WTC11 (cell line): ENCODE measurements at regions of chr16 and their contacts with region 1.

Region 1: DNA sequence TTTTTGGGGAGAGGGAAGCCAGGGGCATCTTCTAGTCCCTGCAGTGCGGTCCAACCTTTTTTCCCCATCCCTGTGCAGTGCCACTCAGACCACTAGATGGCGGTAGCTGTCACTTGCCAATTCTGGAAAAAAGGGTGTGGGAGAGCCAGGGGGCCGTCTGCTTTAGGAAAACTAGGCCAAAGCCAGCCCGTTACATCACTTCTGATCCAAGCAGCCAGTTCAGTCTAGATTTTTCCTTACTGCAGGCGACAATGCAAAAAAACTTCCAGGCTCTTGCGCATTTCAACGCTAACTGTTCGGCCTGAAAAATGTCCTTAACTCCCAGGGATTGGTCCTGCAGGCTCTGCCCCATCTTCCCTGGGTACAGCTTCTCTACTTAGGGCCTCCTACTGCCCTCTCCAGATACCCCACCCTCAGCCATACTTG is 69.2 kb upstream of the CES5A start:
- DNase-seq: peak; percentile 80
- ATAC-seq: peak; percentile 97
- H3K4me3 Mint-ChIP-seq: no peak overlapping the region
- H3K27ac Mint-ChIP-seq: no peak overlapping the region
- H3K4me1 Mint-ChIP-seq: peaks cover 22% of the 10 kb centered on the region
- H3K27me3 Mint-ChIP-seq: no peaks in the 10 kb centered on the region; the same call in none of the 2 replicates
- CTCF ChIP-seq: peak; percentile 88

Region 2: GRCh38 chr16:55861288-55861687 is 83.1 kb before region 1 on chr16:
- CTCF ChIA-PET with region 1: no interaction called
- POLR2A ChIA-PET with region 1: no interaction called
- DNase-seq: no peak
- ATAC-seq: no peak
- H3K4me3 Mint-ChIP-seq: no peak overlapping the region
- H3K27ac Mint-ChIP-seq: no peak overlapping the region
- H3K4me1 Mint-ChIP-seq: no peaks in the 10 kb centered on the region
- H3K27me3 Mint-ChIP-seq: no peaks in the 10 kb centered on the region; the same call in 1 of the 2 replicates
- CTCF ChIP-seq: no peak

Region 3: DNA sequence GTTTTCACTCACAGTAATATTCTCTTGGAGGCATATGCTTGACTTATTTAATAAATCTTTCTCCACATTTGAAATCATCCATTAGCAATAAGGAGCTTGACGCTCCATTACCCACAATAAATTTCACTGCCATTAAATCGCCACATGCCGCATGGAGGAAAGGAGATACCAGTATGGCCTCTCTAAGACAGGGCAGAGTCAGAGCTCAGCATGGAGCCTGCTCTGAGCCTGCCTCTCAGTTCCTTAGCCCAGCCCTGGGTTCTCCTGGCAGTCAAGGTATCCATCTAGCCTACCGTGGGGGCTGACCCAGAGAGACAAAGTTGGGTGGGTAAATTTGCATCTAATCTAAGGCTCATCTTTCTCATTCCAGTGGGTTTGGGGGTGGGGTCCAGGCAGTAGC is 11.0 kb after region 1 on chr16:
- CTCF ChIA-PET with region 1: interaction called, 13 read pairs
- POLR2A ChIA-PET with region 1: no interaction called
- DNase-seq: no peak
- ATAC-seq: no peak
- H3K4me3 Mint-ChIP-seq: no peak overlapping the region
- H3K27ac Mint-ChIP-seq: no peak overlapping the region
- H3K4me1 Mint-ChIP-seq: no peaks in the 10 kb centered on the region
- H3K27me3 Mint-ChIP-seq: no peaks in the 10 kb centered on the region; the same call in 1 of the 2 replicates
- CTCF ChIP-seq: no peak